ENCODE measurements at regions of chr4 and their contacts with region 1.

Region 1: GRCh38 chr4:152500800-152501434 is 35.0 kb downstream of the FBXW7 start:
- DNase-seq: peak; percentile 15 to 27
- ATAC-seq: peak; percentile 76 to 82
- H3K4me3 ChIP-seq: no peak overlapping the region
- H3K27ac ChIP-seq: no peak overlapping the region
- H3K4me1 ChIP-seq: peaks cover 0 to 6% of the 10 kb centered on the region in 2 donors
- H3K27me3 ChIP-seq: no peaks in the 10 kb centered on the region
- CTCF ChIP-seq: peak; percentile 47 to 80 (median 65)
- POLR2A ChIP-seq: no peak

Region 2: DNA sequence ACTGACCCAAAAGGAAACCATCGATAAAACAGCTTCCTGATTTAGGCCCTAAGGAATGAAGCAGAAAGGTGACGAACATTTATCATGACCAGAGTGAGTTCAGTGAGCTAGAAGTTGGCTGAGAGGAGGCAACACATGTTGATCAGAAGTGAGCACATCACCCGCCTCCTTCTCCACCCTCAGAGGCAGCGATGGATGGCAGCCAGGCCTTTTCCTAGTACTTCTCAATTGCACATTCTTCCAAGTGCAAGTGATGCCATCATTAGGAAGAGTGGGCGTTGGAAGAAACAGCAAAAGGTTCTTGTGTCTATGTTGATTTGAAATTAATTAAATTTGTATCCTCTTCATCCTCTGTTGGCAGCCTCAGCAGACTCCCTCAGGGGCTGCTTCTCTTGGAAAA is 127.2 kb after region 1 on chr4:
- in situ Hi-C with region 1: no loop called
- intact Hi-C with region 1: no loop called
- DNase-seq: no peak
- ATAC-seq: no peak
- H3K4me3 ChIP-seq: no peak overlapping the region
- H3K27ac ChIP-seq: no peak overlapping the region
- H3K4me1 ChIP-seq: no peaks in the 10 kb centered on the region
- H3K27me3 ChIP-seq: no peaks in the 10 kb centered on the region
- CTCF ChIP-seq: no peak
- POLR2A ChIP-seq: no peak

Region 3: DNA sequence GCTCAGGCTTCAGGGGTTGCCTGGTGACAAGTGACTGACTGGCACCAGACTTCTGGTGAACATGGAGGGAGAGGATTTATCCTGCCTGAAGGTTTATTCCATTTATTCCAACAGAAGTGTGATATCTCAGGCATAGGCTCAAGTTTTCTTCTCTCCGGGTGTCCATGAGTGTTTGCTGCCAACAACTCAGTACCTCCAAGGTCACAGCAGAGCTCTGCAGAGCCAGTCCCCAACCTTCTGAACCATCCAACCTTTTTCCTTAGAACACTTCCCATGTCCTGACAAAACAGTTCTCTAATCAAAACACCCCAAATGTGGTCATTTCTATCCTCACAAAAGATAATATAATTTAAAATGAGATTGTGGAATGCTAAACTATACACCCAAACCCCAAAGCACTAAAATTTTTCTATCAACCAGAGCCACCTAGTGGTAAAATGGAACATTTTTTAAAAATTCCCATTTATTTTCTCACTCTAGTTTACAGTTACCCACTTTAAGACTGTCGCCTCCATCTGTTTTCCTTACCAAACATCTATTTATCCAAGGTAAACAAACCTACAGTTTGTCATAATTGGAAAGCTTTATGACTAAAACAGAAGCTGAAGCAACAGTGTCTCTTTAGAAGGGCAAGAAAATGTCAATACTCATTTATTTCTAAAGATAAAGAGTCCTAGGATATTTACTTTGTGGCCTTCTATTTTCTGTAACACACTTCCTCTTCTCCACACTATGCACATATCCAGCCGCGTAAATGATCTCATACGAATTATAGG is 139.3 kb after region 1 on chr4:
- in situ Hi-C with region 1: loop called (anchors 5 to 10 kb)
- intact Hi-C with region 1: loop called (anchors 1 kb)
- DNase-seq: no peak
- ATAC-seq: no peak
- H3K4me3 ChIP-seq: no peak overlapping the region
- H3K27ac ChIP-seq: no peak overlapping the region
- H3K4me1 ChIP-seq: no peaks in the 10 kb centered on the region
- H3K27me3 ChIP-seq: no peaks in the 10 kb centered on the region
- CTCF ChIP-seq: peak; percentile 30 to 63 (median 49)
- POLR2A ChIP-seq: no peak

Region 4: GRCh38 chr4:152735396-152735859 is 234.5 kb after region 1 on chr4:
- in situ Hi-C with region 1: loop called in 3 of 4 experiments (anchors 5 to 10 kb)
- intact Hi-C with region 1: loop called (anchors 1 kb)
- DNase-seq: no peak
- ATAC-seq: no peak
- H3K4me3 ChIP-seq: no peak overlapping the region
- H3K27ac ChIP-seq: no peak overlapping the region
- H3K4me1 ChIP-seq: no peaks in the 10 kb centered on the region
- H3K27me3 ChIP-seq: no peaks in the 10 kb centered on the region
- CTCF ChIP-seq: peak in 4 of 5 experiments; percentile 34 to 66 (median 45)
- POLR2A ChIP-seq: no peak